T-cell (primary cell): ENCODE measurements at regions of chr11 and their contacts with region 1.

Region 1: GRCh38 chr11:62018981-62019664 is 51.7 kb upstream of the FTH1 start:
- DNase-seq: no peak
- ATAC-seq: peak in 1 of 4 experiments; percentile 45
- H3K4me3 ChIP-seq: no peak overlapping the region
- H3K4me3 Mint-ChIP-seq: no peak overlapping the region
- H3K27ac ChIP-seq: no peak overlapping the region
- H3K27ac Mint-ChIP-seq: peak overlapping the region in 1 of 2 donors; percentile 20
- H3K4me1 ChIP-seq: no peaks in the 10 kb centered on the region
- H3K4me1 Mint-ChIP-seq: peaks cover 0 to 10% (median 3%) of the 10 kb centered on the region in 3 donors
- H3K27me3 ChIP-seq: peaks cover 0 to 3% of the 10 kb centered on the region in 2 experiments
- H3K27me3 Mint-ChIP-seq: no peaks in the 10 kb centered on the region

Region 2: DNA sequence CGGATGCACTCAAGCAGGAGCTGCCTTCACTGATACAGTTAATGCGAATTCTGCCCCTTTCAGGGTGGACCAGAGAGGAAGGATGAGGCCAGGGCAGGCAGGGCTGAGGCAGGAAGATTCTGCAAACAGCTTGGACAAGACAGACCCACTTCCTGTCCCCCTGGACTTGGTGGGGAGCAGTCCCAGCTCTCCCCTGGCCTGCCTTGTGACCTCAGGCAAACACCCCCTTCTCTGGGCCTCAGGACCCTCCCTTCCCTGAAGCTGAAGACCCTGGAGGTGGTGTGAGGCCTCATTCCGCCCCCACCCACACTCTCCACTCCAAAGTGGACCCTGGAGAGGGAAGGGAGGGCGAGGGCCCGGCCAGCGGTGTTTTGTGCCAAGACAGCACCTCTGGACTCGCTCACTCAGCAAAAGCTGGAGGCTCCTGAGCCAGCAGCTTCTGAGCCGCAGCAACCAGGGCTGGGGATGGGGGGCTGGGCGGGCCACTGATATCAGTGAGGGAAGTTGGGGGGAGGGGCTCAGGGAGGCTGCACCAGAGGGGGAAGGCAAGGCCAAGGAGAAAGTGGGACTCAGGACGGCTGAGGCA is 110.3 kb before region 1 on chr11:
- CTCF ChIA-PET with region 1: no interaction called
- POLR2A ChIA-PET with region 1: no interaction called
- DNase-seq: no peak
- ATAC-seq: no peak
- H3K4me3 ChIP-seq: no peak overlapping the region
- H3K4me3 Mint-ChIP-seq: no peak overlapping the region
- H3K27ac ChIP-seq: no peak overlapping the region
- H3K27ac Mint-ChIP-seq: no peak overlapping the region
- H3K4me1 ChIP-seq: peaks cover 0 to 3% of the 10 kb centered on the region in 2 experiments
- H3K4me1 Mint-ChIP-seq: peaks cover 0 to 4% (median 0%) of the 10 kb centered on the region in 3 donors
- H3K27me3 ChIP-seq: peaks cover 0 to 45% of the 10 kb centered on the region in 2 experiments
- H3K27me3 Mint-ChIP-seq: peaks cover 10 to 17% of the 10 kb centered on the region in 2 donors

Region 3: GRCh38 chr11:61999141-61999975 is 19.8 kb before region 1 on chr11:
- CTCF ChIA-PET with region 1: no interaction called
- POLR2A ChIA-PET with region 1: interaction called in 1 of 2 experiments, 10 read pairs
- DNase-seq: no peak
- ATAC-seq: no peak
- H3K4me3 ChIP-seq: no peak overlapping the region
- H3K4me3 Mint-ChIP-seq: no peak overlapping the region
- H3K27ac ChIP-seq: no peak overlapping the region
- H3K27ac Mint-ChIP-seq: no peak overlapping the region
- H3K4me1 ChIP-seq: no peaks in the 10 kb centered on the region
- H3K4me1 Mint-ChIP-seq: no peaks in the 10 kb centered on the region
- H3K27me3 ChIP-seq: peaks cover 0 to 2% of the 10 kb centered on the region in 2 experiments
- H3K27me3 Mint-ChIP-seq: no peaks in the 10 kb centered on the region

Region 4: GRCh38 chr11:62193952-62194351 is 174.8 kb after region 1 on chr11:
- CTCF ChIA-PET with region 1: no interaction called
- POLR2A ChIA-PET with region 1: no interaction called
- DNase-seq: no peak
- ATAC-seq: no peak
- H3K4me3 ChIP-seq: no peak overlapping the region
- H3K4me3 Mint-ChIP-seq: no peak overlapping the region
- H3K27ac ChIP-seq: no peak overlapping the region
- H3K27ac Mint-ChIP-seq: no peak overlapping the region
- H3K4me1 ChIP-seq: no peaks in the 10 kb centered on the region
- H3K4me1 Mint-ChIP-seq: no peaks in the 10 kb centered on the region
- H3K27me3 ChIP-seq: peaks cover 0 to 56% of the 10 kb centered on the region in 2 experiments
- H3K27me3 Mint-ChIP-seq: peaks cover 54 to 69% of the 10 kb centered on the region in 2 donors

Region 5: DNA sequence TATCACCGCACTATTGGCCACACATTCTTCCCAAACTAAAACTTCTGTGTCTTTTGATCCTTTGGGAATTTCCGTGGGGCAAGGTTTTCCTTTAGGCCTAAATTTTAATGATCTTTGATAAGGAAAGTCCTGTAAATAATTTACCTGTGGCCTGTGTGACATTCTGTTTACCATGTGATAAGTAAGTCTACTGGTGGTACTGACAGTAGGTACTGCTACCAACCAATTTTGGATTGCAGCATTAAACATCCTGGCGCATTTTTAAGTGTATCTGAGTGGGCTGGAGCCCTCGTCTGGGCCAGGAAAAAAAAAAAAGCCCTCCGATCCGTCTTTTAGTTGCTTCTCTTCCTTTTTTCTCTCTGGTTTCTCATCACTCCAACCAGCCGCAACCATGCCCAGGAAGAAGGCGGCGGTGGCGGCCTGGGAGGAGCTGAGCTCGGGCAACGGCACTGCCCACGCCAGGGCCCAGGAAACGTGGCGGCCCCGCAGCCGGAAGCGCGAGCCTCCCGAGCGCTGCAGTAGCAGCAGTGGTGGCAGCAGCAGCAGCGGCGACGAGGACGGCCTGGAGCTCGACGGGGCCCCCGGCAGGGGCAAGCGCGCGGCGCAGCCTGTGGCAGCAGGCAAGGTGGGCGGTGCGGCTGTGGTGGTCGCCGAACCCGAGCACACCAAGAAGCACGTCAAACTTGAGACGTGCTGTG is 351.8 kb after region 1 on chr11:
- CTCF ChIA-PET with region 1: no interaction called
- POLR2A ChIA-PET with region 1: no interaction called
- DNase-seq: peak in 31 of 35 experiments; percentile 8 to 66 (median 34)
- ATAC-seq: peak; percentile 92 to 97 (median 96)
- H3K4me3 ChIP-seq: no peak overlapping the region
- H3K4me3 Mint-ChIP-seq: peak overlapping the region; percentile 52 to 65 (median 61)
- H3K27ac ChIP-seq: peak overlapping the region; percentile 52
- H3K27ac Mint-ChIP-seq: peak overlapping the region; percentile 84 to 87
- H3K4me1 ChIP-seq: peaks cover 0 to 12% of the 10 kb centered on the region in 2 experiments
- H3K4me1 Mint-ChIP-seq: peaks cover 0 to 10% (median 4%) of the 10 kb centered on the region in 3 donors
- H3K27me3 ChIP-seq: no peaks in the 10 kb centered on the region
- H3K27me3 Mint-ChIP-seq: no peaks in the 10 kb centered on the region